ENCODE measurements at regions of chr1 and their contacts with region 1.

Region 1: GRCh38 chr1:155989242-155990004 is 11.1 kb upstream of the ARHGEF2 start:
- DNase-seq: no peak
- ATAC-seq: peak; percentile 97
- H3K4me3 ChIP-seq: no peak overlapping the region
- H3K27ac ChIP-seq: peak overlapping the region; percentile 40; the same call in 1 of the 2 replicates
- H3K4me1 ChIP-seq: peaks cover 17% of the 10 kb centered on the region
- H3K27me3 ChIP-seq: no peaks in the 10 kb centered on the region
- CTCF ChIP-seq: peak; percentile 96 to 99 (median 99)
- EP300 ChIP-seq: no peak
- POLR2A ChIP-seq: no peak
- RAD21 ChIP-seq: peak; percentile 100

Region 2: GRCh38 chr1:155940531-155940992 is 48.9 kb before region 1 on chr1:
- CTCF ChIA-PET with region 1: interaction called, 227 read pairs
- POLR2A ChIA-PET with region 1: interaction called, 273 read pairs
- RAD21 ChIA-PET with region 1: interaction called, 214 read pairs
- SMC1A ChIA-PET with region 1: interaction called, 229 read pairs
- in situ Hi-C with region 1: loop called (anchors 5 kb)
- intact Hi-C with region 1: loop called (anchors 1 kb)
- DNase-seq: no peak
- ATAC-seq: peak; percentile 1
- H3K4me3 ChIP-seq: no peak overlapping the region
- H3K27ac ChIP-seq: peak overlapping the region; percentile 49
- H3K4me1 ChIP-seq: peaks cover 53% of the 10 kb centered on the region
- H3K27me3 ChIP-seq: no peaks in the 10 kb centered on the region
- CTCF ChIP-seq: no peak
- EP300 ChIP-seq: no peak
- POLR2A ChIP-seq: no peak
- RAD21 ChIP-seq: no peak

Region 3: GRCh38 chr1:155961937-155962336 is 27.5 kb before region 1 on chr1:
- CTCF ChIA-PET with region 1: interaction called, 54 read pairs
- POLR2A ChIA-PET with region 1: interaction called, 180 read pairs
- RAD21 ChIA-PET with region 1: interaction called, 6 read pairs
- SMC1A ChIA-PET with region 1: interaction called, 152 read pairs
- in situ Hi-C with region 1: no loop called
- intact Hi-C with region 1: no loop called
- DNase-seq: no peak
- ATAC-seq: 0 out of 3 replicates have a peak, but pooled peaks have one; percentile 5
- H3K4me3 ChIP-seq: no peak overlapping the region
- H3K27ac ChIP-seq: no peak overlapping the region; the same call in 1 of the 2 replicates
- H3K4me1 ChIP-seq: peaks cover 39% of the 10 kb centered on the region
- H3K27me3 ChIP-seq: no peaks in the 10 kb centered on the region
- CTCF ChIP-seq: peak in 1 of 3 experiments; percentile 9; a peak in 1 of 6 replicates
- EP300 ChIP-seq: no peak
- POLR2A ChIP-seq: peak; percentile 57; the same call in 1 of the 2 replicates
- RAD21 ChIP-seq: peak; percentile 39

Region 4: DNA sequence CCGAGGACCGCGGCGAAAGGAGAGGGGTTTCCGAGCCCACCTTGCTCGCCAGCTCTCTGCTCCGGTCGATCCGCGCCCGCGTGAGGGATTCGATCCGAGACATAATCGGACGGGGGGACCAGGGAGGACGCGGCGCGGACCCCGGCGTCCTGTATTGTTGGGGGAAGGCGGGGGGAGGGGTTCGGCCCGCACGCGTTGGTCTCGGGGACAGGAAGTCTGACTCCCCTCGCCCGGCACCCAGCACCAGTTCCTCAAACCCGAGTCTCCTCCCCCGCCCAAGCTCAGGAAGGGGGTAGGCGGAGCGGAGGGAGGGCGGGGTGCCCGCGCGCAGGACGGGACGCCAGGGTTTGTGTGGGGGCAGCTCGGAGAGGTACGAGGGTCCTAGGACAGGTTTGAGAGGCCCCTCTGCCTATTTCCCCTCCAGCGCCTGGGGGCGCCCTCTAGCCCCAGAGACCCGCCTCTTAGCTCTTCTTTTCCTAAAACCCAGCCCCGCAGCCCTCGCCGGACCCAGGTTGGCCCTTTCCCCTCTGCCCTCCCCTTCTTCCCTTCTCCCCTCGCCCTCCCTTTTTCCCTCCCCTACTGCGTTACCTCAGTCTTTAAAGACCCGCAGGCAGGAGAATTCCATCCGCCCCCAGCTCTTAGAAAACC is 11.0 kb before region 1 on chr1 and contains the start of gene ARHGEF2:
- CTCF ChIA-PET with region 1: interaction called, 65 read pairs
- POLR2A ChIA-PET with region 1: interaction called, 16 read pairs
- RAD21 ChIA-PET with region 1: interaction called, 65 read pairs
- SMC1A ChIA-PET with region 1: interaction called, 18 read pairs
- in situ Hi-C with region 1: no loop called
- intact Hi-C with region 1: no loop called
- DNase-seq: no peak
- ATAC-seq: peak; percentile 78
- H3K4me3 ChIP-seq: peak within 1 kb of the TSS; percentile 100
- H3K27ac ChIP-seq: peak within 1 kb of the TSS; percentile 97
- H3K4me1 ChIP-seq: peaks cover 28% of the 10 kb centered on the region
- H3K27me3 ChIP-seq: no peaks in the 10 kb centered on the region
- CTCF ChIP-seq: peak in 2 of 3 experiments; percentile 19 to 27; a peak in 4 of 6 replicates
- EP300 ChIP-seq: no peak
- POLR2A ChIP-seq: peak; percentile 91
- RAD21 ChIP-seq: no peak
- polyA plus RNA-seq, gene ARHGEF2: 8.1 to 10.6 TPM

Region 5: GRCh38 chr1:156067262-156067661 is 77.8 kb after region 1 on chr1:
- CTCF ChIA-PET with region 1: interaction called, 62 read pairs
- POLR2A ChIA-PET with region 1: no interaction called
- RAD21 ChIA-PET with region 1: interaction called, 39 read pairs
- SMC1A ChIA-PET with region 1: interaction called, 43 read pairs
- in situ Hi-C with region 1: no loop called
- intact Hi-C with region 1: loop called (anchors 1 kb)
- DNase-seq: no peak
- ATAC-seq: no peak
- H3K4me3 ChIP-seq: no peak overlapping the region
- H3K27ac ChIP-seq: no peak overlapping the region
- H3K4me1 ChIP-seq: no peaks in the 10 kb centered on the region
- H3K27me3 ChIP-seq: no peaks in the 10 kb centered on the region
- CTCF ChIP-seq: no peak
- EP300 ChIP-seq: no peak
- POLR2A ChIP-seq: no peak
- RAD21 ChIP-seq: no peak

Region 6: DNA sequence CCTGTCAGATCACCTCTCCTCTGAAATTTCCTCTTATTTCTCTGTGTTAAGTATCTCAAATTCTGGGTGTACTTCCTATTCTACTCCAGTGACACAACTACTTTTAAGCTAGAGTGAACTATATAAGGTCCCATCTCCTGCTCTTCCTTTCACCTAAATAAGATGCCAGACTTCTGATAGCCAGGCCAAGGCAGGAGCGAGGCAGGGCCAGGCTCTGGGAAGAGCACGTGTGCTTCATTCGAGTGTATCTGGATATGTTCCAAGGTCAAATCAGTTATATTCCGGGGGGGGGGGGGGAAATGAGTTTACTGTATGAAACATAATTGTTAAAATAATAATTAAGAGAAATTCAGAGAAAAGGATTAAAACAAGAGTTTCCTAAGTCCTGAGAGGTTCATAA is 991.1 kb after region 1 on chr1:
- CTCF ChIA-PET with region 1: no interaction called
- POLR2A ChIA-PET with region 1: no interaction called
- RAD21 ChIA-PET with region 1: no interaction called
- SMC1A ChIA-PET with region 1: no interaction called
- in situ Hi-C with region 1: no loop called
- intact Hi-C with region 1: no loop called
- DNase-seq: no peak
- ATAC-seq: no peak
- H3K4me3 ChIP-seq: no peak overlapping the region
- H3K27ac ChIP-seq: no peak overlapping the region
- H3K4me1 ChIP-seq: no peaks in the 10 kb centered on the region
- H3K27me3 ChIP-seq: no peaks in the 10 kb centered on the region
- CTCF ChIP-seq: no peak
- EP300 ChIP-seq: no peak
- POLR2A ChIP-seq: no peak
- RAD21 ChIP-seq: no peak

Measured in GM12878 (cell line).